Psoas muscle (tissue), 8 donors: ENCODE measurements at regions of chr16 and their contacts with region 1.

Region 1: GRCh38 chr16:89657442-89658220 is at the starts of genes CHMP1A and SPATA33:
- DNase-seq: peak; percentile 93 to 96
- ATAC-seq: peak; percentile 98 to 99 (median 99)
- H3K4me3 ChIP-seq: peak within 1 kb of the TSS; percentile 99
- H3K27ac ChIP-seq: peak within 1 kb of the TSS; percentile 91
- H3K4me1 ChIP-seq: peaks cover 16% of the 10 kb centered on the region
- H3K27me3 ChIP-seq: no peaks in the 10 kb centered on the region
- CTCF ChIP-seq: no peak
- total RNA-seq, gene CHMP1A: 42.2 to 49.9 (median 45.9) TPM
- total RNA-seq, gene SPATA33: 1.2 to 3.0 (median 2.5) TPM

Region 2: DNA sequence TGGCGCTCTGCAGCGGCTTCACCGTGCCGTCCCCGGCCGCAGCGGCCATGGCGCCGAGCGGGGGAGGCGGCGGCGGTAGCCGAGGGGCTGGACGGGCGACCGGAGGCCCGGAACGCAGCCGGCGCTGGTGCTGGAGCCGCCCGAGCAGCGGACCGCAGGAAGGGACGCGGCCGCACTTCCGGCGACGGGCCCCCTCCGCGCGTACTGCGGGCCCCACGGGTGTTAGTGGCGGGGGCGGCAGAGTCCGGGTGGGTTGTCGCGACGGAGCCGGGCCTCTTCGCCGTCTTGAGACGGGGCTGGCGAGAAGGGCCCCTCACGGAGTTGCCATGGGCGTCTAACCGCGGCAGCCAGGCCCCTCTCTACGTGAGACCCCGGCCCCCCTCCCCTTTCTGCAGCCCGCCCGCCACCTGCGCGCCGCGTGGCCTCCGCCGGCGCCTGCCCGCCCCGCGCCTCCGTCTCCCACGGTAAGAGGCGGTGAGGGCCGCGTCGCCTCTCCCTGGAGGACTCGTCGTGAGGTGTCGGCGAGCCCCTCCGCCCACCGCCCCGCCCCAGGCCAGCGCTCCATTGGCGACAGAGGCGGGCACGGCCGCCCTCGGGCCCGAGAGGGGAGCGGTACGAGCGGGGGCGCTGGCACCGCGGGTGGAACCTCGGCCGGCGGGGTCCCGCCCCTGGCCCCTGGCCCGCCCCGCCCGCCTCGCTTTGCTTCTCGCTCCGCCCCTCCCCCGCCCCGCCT is 63.3 kb after region 1 on chr16 and contains the starts of genes VPS9D1 and ZNF276:
- intact Hi-C with region 1: loop called in 1 of 2 experiments (anchors 1 kb)
- DNase-seq: peak; percentile 86 to 89
- ATAC-seq: peak; percentile 88 to 94 (median 90)
- H3K4me3 ChIP-seq: peak within 1 kb of the TSS; percentile 97
- H3K27ac ChIP-seq: peak within 1 kb of the TSS; percentile 98
- H3K4me1 ChIP-seq: peaks cover 31% of the 10 kb centered on the region
- H3K27me3 ChIP-seq: no peaks in the 10 kb centered on the region
- CTCF ChIP-seq: no peak
- total RNA-seq, gene VPS9D1: 3.7 to 7.0 (median 5.6) TPM
- total RNA-seq, gene ZNF276: 11.5 to 13.6 (median 11.7) TPM